GM10248 (cell line): ENCODE measurements at regions of chr3 and their contacts with region 1.

Region 1: GRCh38 chr3:4978204-4978965 is 852 bp upstream of the BHLHE40 start:
- DNase-seq: peak; percentile 83
- CTCF ChIP-seq: no peak

Region 2: GRCh38 chr3:4720279-4721075 is 257.9 kb before region 1 on chr3:
- CTCF ChIA-PET with region 1: interaction called, 52 read pairs
- POLR2A ChIA-PET with region 1: no interaction called
- DNase-seq: peak; percentile 35
- CTCF ChIP-seq: peak; percentile 44

Region 3: GRCh38 chr3:4751502-4752101 is 226.8 kb before region 1 on chr3:
- CTCF ChIA-PET with region 1: interaction called, 28 read pairs
- POLR2A ChIA-PET with region 1: interaction called, 33 read pairs
- DNase-seq: peak; percentile 49
- CTCF ChIP-seq: no peak

Region 4: GRCh38 chr3:4850211-4850927 is 128.0 kb before region 1 on chr3:
- CTCF ChIA-PET with region 1: interaction called, 19 read pairs
- POLR2A ChIA-PET with region 1: interaction called, 9 read pairs
- DNase-seq: no peak
- CTCF ChIP-seq: no peak

Region 5: GRCh38 chr3:4908433-4909157 is 69.8 kb before region 1 on chr3:
- CTCF ChIA-PET with region 1: no interaction called
- POLR2A ChIA-PET with region 1: no interaction called
- DNase-seq: no peak
- CTCF ChIP-seq: no peak

Region 6: DNA sequence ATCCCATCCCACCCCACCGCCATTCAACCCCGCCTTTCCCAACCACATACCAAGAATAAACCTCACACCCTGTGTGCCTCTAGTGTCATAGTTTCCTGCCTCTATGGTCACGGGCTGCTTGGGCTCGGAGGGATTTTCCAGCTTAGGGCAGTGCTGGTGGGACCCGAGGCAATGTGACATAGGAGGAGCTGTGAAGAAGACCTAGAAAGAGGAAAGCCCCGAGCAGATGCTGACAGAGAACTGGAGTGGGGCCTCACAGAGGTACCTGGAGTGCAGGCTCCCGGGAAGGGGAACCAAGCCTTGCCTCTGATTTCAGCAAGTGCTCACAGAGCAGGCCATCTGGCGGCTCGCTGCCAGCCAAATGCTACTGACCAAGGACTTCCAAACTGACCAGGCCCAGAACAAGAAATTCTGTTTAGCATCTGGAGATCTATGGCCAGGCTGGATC is 28.4 kb after region 1 on chr3:
- CTCF ChIA-PET with region 1: interaction called, 22 read pairs
- POLR2A ChIA-PET with region 1: interaction called, 19 read pairs
- DNase-seq: peak; percentile 84
- CTCF ChIP-seq: peak; percentile 11

Region 7: GRCh38 chr3:5026331-5027218 is 48.2 kb after region 1 on chr3:
- CTCF ChIA-PET with region 1: interaction called, 40 read pairs
- POLR2A ChIA-PET with region 1: interaction called, 6 read pairs
- DNase-seq: peak; percentile 72
- CTCF ChIP-seq: peak; percentile 72

Region 8: DNA sequence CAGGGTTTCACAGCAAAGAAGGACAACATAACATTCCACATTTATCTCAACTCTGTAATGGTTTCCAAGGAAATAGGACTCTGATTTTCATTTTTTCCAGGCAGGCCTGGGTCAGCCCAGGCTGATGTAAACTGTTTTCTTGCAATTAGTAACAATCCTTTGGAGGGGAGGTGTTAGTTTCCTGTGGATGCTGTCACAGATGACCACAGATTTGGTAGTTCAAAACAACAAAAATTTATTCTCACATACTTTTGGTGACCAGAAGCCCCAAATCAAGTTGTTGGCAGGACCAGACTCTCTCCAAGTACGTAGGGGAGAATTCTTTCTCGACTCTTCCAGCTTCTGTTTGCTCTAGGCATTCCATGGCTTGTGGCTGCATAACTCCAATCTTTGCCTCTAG is 297.1 kb after region 1 on chr3:
- CTCF ChIA-PET with region 1: no interaction called
- POLR2A ChIA-PET with region 1: no interaction called
- DNase-seq: no peak
- CTCF ChIP-seq: no peak